Gastrocnemius medialis (tissue), 4 donors: ENCODE measurements at regions of chr7 and their contacts with region 1.

Region 1: DNA sequence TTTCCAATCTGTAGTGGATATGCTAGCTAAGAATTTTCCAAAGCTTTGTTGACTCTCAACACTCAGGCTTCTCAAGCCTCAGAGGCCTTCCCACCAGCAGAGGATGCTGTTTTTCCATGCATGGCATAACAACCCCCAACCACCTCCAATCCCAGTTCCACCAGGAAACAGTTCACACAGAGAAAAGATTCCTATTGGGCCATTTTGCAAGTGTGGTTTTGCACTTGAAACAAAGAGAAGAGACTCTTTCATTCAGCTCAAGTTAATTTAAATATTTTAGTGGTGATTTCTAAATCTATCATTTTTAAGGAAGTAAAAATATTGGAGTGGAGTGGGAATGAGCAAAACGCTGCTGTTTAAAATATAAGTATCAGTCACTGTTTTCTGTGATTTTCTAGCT is 105.6 kb upstream of the COL1A2 start:
- DNase-seq: peak; percentile 22 to 23
- ATAC-seq: peak; percentile 27 to 58
- H3K4me3 ChIP-seq: no peak overlapping the region
- H3K27ac ChIP-seq: no peak overlapping the region
- H3K4me1 ChIP-seq: no peaks in the 10 kb centered on the region
- H3K27me3 ChIP-seq: no peaks in the 10 kb centered on the region
- CTCF ChIP-seq: peak; percentile 46 to 72 (median 57)
- POLR2A ChIP-seq: no peak

Region 2: DNA sequence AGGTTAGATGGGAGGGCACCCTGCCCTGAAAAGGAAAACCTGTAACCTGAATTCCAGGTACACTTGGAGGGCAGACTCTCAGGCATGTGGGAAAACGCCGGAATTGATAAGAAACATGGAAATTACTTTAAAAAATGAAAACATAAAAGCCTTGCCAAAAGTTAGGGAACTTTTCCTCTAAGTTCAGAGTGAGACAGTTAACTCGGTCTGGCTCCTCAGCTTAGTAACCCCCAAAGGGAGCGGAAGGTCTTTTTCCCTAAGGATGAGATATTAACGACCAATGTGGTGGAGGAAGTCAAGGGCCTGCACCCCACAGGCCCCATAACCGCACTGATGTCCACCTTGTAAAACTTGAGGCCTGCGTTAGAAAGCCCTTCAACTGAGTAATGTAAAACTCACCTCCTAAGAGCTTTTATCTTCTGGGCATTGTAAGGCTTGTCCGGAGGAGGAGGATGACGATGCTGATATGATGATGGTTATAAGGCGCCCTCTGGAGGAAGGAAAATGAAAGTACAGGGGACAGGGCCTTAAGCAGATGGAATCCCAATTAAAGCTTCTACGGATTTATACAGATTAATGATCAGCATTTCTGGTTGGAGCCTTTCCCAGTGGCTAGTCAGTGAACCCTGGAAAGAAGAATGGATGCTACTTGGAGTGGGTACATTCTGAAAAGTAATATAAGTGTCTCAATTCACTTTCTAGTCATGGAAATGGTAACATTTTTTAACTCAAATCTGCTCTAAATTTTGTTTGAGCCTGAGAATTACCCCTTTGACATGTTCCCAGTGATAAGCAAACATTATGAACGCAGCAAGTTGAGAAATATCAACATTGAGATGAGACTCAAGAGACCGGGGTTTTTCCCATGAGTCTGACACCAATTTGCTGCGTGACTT is 106.3 kb after region 1 on chr7:
- in situ Hi-C with region 1: loop called in 2 of 4 experiments (anchors 10 kb)
- intact Hi-C with region 1: loop called (anchors 2 kb)
- DNase-seq: peak in 1 of 2 donors; percentile 39
- ATAC-seq: peak; percentile 65 to 82
- H3K4me3 ChIP-seq: peak overlapping the region; percentile 44 to 55 (median 54)
- H3K27ac ChIP-seq: peak overlapping the region; percentile 61 to 75 (median 67)
- H3K4me1 ChIP-seq: peaks cover 0 to 5% of the 10 kb centered on the region in 2 donors
- H3K27me3 ChIP-seq: peaks cover 14 to 39% (median 16%) of the 10 kb centered on the region in 3 donors
- CTCF ChIP-seq: peak; percentile 47 to 63 (median 60)
- POLR2A ChIP-seq: no peak

Region 3: GRCh38 chr7:94436018-94436604 is 147.0 kb after region 1 on chr7:
- in situ Hi-C with region 1: loop called in 1 of 4 experiments (anchors 10 kb)
- intact Hi-C with region 1: loop called (anchors 2 kb)
- DNase-seq: peak; percentile 26 to 43
- ATAC-seq: peak; percentile 47 to 80
- H3K4me3 ChIP-seq: no peak overlapping the region
- H3K27ac ChIP-seq: no peak overlapping the region
- H3K4me1 ChIP-seq: no peaks in the 10 kb centered on the region
- H3K27me3 ChIP-seq: no peaks in the 10 kb centered on the region
- CTCF ChIP-seq: peak; percentile 36 to 73 (median 62)
- POLR2A ChIP-seq: no peak

Region 4: GRCh38 chr7:95242266-95242665 is 953.2 kb after region 1 on chr7:
- in situ Hi-C with region 1: no loop called
- intact Hi-C with region 1: loop called (anchors 2 kb)
- DNase-seq: no peak
- ATAC-seq: no peak
- H3K4me3 ChIP-seq: no peak overlapping the region
- H3K27ac ChIP-seq: no peak overlapping the region
- H3K4me1 ChIP-seq: no peaks in the 10 kb centered on the region
- H3K27me3 ChIP-seq: no peaks in the 10 kb centered on the region
- CTCF ChIP-seq: no peak
- POLR2A ChIP-seq: no peak